ENCODE measurements at regions of chr19 and their contacts with region 1.

Region 1: DNA sequence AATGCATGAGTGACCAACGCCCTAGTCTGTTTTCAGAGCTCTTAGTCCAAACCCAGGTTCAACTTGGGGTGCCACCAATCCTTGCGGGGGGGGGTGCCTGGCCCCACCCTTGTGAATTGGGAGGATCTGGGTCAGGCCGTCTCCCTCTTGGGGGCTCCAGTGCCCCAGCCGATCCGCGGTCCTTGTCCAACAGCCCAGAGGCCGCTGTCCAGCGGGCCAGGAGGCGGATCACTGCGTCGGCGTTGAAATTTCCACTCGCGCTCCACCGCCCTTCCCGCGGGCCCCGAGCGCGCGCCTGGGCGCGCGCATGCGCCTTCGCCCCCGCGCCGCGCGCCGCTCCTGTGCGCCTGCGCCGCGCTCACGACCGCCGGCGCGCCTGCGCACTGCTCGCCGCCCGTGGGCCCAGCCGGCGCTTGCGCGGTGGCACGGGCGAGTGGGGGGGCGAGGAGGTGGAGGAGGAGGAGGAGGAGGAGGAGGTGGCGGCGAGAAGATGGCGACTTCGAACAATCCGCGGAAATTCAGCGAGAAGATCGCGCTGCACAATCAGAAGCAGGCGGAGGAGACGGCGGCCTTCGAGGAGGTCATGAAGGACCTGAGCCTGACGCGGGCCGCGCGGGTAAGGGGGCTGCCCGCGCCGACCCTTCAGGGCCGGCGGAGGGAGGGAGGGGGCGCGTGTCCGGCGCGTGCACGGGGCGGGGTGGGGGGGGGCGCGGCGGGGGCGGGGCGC is at the start of gene CRTC1:
- DNase-seq: peak; percentile 91 to 95 (median 92)
- ATAC-seq: peak; percentile 89 to 92 (median 91)
- H3K4me3 ChIP-seq: peak within 1 kb of the TSS; percentile 25 to 75 (median 64)
- H3K27ac ChIP-seq: peak within 1 kb of the TSS in 11 of 12 donors; percentile 77 to 91 (median 86)
- H3K4me1 ChIP-seq: peaks cover 4 to 28% (median 12%) of the 10 kb centered on the region in 12 donors
- H3K27me3 ChIP-seq: no peaks in the 10 kb centered on the region
- CTCF ChIP-seq: peak in 3 of 12 donors; percentile 7 to 19 (median 10)
- POLR2A ChIP-seq: peak in 1 of 2 donors; percentile 71
- total RNA-seq, gene CRTC1: 3.8 to 10.2 (median 8.2) TPM

Region 2: DNA sequence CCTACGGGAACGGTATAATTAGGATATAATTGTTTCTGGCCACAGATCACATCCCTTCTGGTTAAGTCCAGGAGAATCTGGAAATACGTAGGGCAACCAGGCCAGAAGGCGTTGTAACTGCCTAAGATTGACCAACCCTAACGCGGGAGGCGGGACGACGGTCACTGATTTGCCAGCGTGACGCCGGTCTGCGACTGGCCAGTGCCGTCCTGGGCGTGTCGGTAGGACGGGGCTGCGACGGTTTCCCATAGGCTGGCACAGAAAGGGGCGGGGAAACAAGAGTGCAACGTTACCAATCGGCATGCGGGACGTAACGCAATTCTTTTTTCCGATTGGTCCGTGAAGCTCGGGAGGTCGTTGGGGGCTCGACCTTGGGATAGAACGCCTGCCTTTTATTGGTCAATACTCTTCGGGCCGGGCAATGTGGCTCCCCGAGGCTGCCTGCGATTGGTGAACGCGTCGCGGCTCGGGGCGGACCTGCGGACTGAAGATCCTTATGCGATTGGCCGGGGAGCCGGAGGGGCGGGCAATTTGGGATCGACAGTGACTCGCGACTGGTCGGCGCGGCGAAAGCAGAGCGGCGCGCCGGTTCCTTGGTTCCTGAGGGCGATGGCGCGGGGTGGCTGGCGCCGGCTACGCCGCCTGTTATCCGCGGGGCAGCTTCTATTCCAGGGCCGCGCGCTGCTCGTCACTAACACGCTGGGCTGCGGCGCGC is 490.5 kb before region 1 on chr19 and contains the start of gene MPV17L2:
- intact Hi-C with region 1: no loop called
- DNase-seq: peak; percentile 100
- ATAC-seq: peak; percentile 94 to 99 (median 96)
- H3K4me3 ChIP-seq: peak within 1 kb of the TSS; percentile 40 to 99 (median 84)
- H3K27ac ChIP-seq: peak within 1 kb of the TSS; percentile 78 to 99 (median 94)
- H3K4me1 ChIP-seq: peaks cover 0 to 25% (median 14%) of the 10 kb centered on the region in 12 donors
- H3K27me3 ChIP-seq: no peaks in the 10 kb centered on the region
- CTCF ChIP-seq: no peak
- POLR2A ChIP-seq: peak; percentile 82 to 89
- total RNA-seq, gene MPV17L2: 10.6 to 37.4 (median 14.8) TPM

Region 3: GRCh38 chr19:18571564-18572300 is 111.6 kb before region 1 on chr19 and contains the start of gene UBA52:
- intact Hi-C with region 1: no loop called
- DNase-seq: peak; percentile 97 to 99 (median 98)
- ATAC-seq: peak; percentile 90 to 99 (median 96)
- H3K4me3 ChIP-seq: peak within 1 kb of the TSS; percentile 71 to 100 (median 88)
- H3K27ac ChIP-seq: peak within 1 kb of the TSS; percentile 73 to 97 (median 90)
- H3K4me1 ChIP-seq: peaks cover 8 to 23% (median 17%) of the 10 kb centered on the region in 12 donors
- H3K27me3 ChIP-seq: no peaks in the 10 kb centered on the region
- CTCF ChIP-seq: no peak
- POLR2A ChIP-seq: peak; percentile 35 to 86
- total RNA-seq, gene UBA52: 336 to 944 (median 761) TPM

Region 4: GRCh38 chr19:18636183-18636968 is 47.0 kb before region 1 on chr19:
- intact Hi-C with region 1: loop called in 2 of 10 experiments (anchors 5 kb)
- DNase-seq: peak; percentile 97 to 99 (median 97)
- ATAC-seq: peak; percentile 97 to 99 (median 98)
- H3K4me3 ChIP-seq: peak overlapping the region; percentile 47 to 92 (median 77)
- H3K27ac ChIP-seq: peak overlapping the region in 11 of 12 donors; percentile 11 to 92 (median 76)
- H3K4me1 ChIP-seq: peaks cover 0 to 28% (median 4%) of the 10 kb centered on the region in 12 donors
- H3K27me3 ChIP-seq: no peaks in the 10 kb centered on the region
- CTCF ChIP-seq: no peak
- POLR2A ChIP-seq: no peak

Region 5: GRCh38 chr19:18659281-18660051 is 23.9 kb before region 1 on chr19:
- intact Hi-C with region 1: no loop called
- DNase-seq: peak; percentile 74 to 79 (median 77)
- ATAC-seq: peak; percentile 30 to 66 (median 47)
- H3K4me3 ChIP-seq: peak overlapping the region in 8 of 12 donors; percentile 15 to 41 (median 24)
- H3K27ac ChIP-seq: peak overlapping the region; percentile 47 to 95 (median 79)
- H3K4me1 ChIP-seq: peaks cover 0 to 49% (median 35%) of the 10 kb centered on the region in 12 donors
- H3K27me3 ChIP-seq: no peaks in the 10 kb centered on the region
- CTCF ChIP-seq: no peak
- POLR2A ChIP-seq: no peak

Region 6: DNA sequence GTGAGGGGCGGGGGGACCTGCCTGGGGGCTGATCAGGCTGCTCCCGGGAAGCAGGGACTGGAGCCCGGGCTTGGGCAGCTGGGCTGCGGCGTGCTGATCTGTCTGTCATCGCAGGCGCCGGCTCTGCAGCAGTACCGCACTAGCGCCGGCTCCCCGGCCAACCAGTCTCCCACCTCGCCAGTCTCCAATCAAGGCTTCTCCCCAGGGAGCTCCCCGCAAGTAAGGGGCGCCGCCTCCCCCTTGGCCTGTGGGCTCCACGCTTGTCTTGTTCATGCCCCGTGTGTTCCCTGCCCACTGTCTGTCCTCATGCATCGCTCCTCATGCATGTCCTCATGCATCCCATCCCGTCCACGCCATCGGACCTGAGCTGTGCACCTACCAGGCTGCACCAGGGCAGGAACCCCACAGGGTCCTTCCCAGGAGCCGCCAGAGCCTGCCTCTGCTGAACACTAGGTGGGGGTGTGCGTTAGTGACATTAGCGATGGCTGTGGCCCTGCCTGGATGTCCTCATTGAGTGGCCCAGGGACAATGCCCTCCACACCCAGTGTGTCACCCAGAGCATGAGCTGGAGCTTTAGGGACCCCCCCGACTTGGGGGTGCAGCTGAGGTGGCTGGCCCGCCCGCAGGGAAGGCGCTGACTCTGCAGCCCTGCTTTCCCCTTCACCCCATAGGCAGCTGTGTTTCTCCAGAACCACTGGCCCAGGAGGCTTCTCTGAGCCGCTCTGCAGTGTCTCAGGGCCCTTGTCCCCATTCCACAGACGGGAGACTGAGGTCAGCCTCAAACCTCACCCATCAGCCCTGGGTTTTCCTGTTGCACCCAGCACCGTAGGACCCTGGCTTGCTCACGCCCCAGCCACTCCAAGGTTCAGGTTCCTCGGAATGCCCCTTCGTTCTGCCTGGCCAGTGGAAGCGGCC is 88.2 kb after region 1 on chr19:
- intact Hi-C with region 1: no loop called
- DNase-seq: no peak
- ATAC-seq: peak in 1 of 4 donors; percentile 4
- H3K4me3 ChIP-seq: no peak overlapping the region
- H3K27ac ChIP-seq: no peak overlapping the region
- H3K4me1 ChIP-seq: no peaks in the 10 kb centered on the region
- H3K27me3 ChIP-seq: no peaks in the 10 kb centered on the region
- CTCF ChIP-seq: no peak
- POLR2A ChIP-seq: no peak

Region 7: DNA sequence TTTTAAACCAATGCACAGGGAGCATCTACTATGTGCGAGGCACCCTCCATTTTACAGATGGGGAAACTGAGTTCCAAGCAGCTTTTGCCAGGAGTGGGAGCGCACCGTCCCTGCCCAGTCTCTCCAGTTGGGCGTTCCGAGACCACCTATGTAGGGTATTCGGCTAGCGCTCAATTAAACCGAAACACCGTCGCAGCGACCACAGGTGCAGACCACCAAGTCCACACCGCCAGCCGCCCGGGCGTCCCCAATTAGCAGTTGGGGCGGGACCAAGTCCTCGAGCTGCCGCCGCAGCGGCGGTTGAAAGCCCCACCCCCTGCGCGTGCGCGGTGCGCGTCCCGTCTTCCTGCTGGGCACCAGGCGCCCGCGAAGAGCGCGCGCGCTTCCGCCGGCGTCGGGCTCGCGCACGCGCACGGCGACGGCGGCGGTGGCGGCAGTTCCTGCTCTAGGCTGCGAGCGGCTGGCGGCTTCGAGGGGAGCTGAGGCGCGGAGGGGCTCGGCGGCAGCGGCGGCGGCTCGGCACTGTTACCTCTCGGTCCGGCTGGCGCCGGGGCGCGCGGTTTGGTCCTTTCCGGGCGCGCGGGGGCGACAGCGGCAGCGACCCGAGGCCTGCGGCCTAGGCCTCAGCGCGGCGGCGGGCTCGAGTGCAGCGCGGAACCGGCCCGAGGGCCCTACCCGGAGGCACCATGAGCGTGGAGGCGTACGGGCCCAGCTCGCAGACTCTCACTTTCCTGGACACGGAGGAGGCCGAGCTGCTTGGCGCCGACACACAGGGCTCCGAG is 148.3 kb after region 1 on chr19 and contains the start of gene UPF1:
- intact Hi-C with region 1: loop called in 4 of 10 experiments (anchors 5 to 10 kb)
- DNase-seq: peak; percentile 95 to 99 (median 96)
- ATAC-seq: peak; percentile 93 to 96 (median 94)
- H3K4me3 ChIP-seq: peak within 1 kb of the TSS; percentile 71 to 97 (median 88)
- H3K27ac ChIP-seq: peak within 1 kb of the TSS; percentile 62 to 95 (median 86)
- H3K4me1 ChIP-seq: peaks cover 4 to 44% (median 32%) of the 10 kb centered on the region in 12 donors
- H3K27me3 ChIP-seq: no peaks in the 10 kb centered on the region
- CTCF ChIP-seq: peak in 5 of 12 donors; percentile 3 to 21 (median 16)
- POLR2A ChIP-seq: peak in 1 of 2 donors; percentile 72
- total RNA-seq, gene UPF1: 27.5 to 84.4 (median 40.2) TPM

Measured in heart left ventricle (tissue), 16 donors.